Sciatic nerve (tissue), 2 donors: ENCODE measurements at regions of chr12 and their contacts with region 1.

Region 1: DNA sequence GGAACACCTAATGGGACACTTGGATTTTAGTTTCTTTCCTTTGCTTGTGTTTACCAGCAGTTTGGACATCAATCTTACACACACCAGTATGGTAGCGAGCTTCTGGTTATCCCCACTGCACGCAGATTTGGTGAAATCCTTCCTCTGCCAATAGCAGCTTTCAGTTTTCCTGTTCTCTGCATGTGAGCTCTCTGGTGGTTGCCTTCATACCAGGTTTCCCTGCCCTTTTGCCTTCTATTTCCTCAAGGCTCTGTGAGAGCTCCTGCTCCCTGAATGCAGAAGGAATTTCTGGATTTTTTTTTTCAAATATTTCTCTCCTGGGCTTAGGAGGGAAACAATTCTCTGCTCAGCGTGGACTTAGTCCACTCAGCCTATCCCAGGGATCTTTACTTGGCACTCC is 93.0 kb upstream of the CCDC91 start:
- DNase-seq: no peak
- ATAC-seq: peak; percentile 21

Region 2: GRCh38 chr12:27207615-27208413 is 889.4 kb before region 1 on chr12:
- intact Hi-C with region 1: loop called (anchors 10 kb)
- DNase-seq: no peak
- ATAC-seq: no peak

Region 3: GRCh38 chr12:28083840-28084678 is 13.2 kb before region 1 on chr12:
- intact Hi-C with region 1: loop called (anchors 1 kb)
- DNase-seq: no peak
- ATAC-seq: peak; percentile 95